CD8-positive, alpha-beta T cell (primary cell): ENCODE measurements at regions of chr6 and their contacts with region 1.

Region 1: GRCh38 chr6:31197559-31198305 is 27.2 kb upstream of the POU5F1 start:
- DNase-seq: peak; percentile 88 to 98 (median 93)
- ATAC-seq: peak; percentile 80
- H3K4me3 ChIP-seq: peak overlapping the region; percentile 79 to 80
- H3K4me3 Mint-ChIP-seq: peak overlapping the region; percentile 83
- H3K27ac ChIP-seq: peak overlapping the region; percentile 97 to 98
- H3K27ac Mint-ChIP-seq: peak overlapping the region; percentile 100
- H3K4me1 ChIP-seq: peaks cover 43% of the 10 kb centered on the region
- H3K4me1 Mint-ChIP-seq: peaks cover 62% of the 10 kb centered on the region
- H3K27me3 ChIP-seq: no peaks in the 10 kb centered on the region
- H3K27me3 Mint-ChIP-seq: no peaks in the 10 kb centered on the region
- CTCF ChIP-seq: no peak

Region 2: DNA sequence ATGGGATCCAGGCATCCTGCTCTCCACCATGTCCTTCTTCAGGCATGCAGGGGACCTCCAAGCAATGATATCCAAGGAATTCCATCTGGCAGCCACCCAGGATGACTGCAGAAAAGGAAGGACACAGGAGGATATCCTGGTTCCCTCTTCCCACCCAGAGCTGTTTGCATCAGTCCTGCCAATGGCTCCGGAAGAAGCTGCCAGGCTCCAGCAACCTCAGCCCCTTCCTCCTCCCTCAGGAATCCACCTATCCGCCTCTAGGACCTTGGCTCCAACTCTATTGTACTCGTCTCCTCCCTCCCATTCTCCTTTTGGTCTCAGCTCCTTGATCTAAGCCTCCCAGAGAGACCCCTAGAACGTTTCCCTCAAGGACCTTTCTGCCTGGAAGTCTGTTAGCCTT is 58.1 kb before region 1 on chr6:
- CTCF ChIA-PET with region 1: interaction called, 17 read pairs
- POLR2A ChIA-PET with region 1: interaction called, 3 read pairs
- intact Hi-C with region 1: loop called in 1 of 2 experiments (anchors 1 kb)
- DNase-seq: no peak
- ATAC-seq: no peak
- H3K4me3 ChIP-seq: no peak overlapping the region
- H3K4me3 Mint-ChIP-seq: no peak overlapping the region
- H3K27ac ChIP-seq: no peak overlapping the region
- H3K27ac Mint-ChIP-seq: no peak overlapping the region
- H3K4me1 ChIP-seq: peaks cover 5% of the 10 kb centered on the region
- H3K4me1 Mint-ChIP-seq: peaks cover 4% of the 10 kb centered on the region
- H3K27me3 ChIP-seq: no peaks in the 10 kb centered on the region
- H3K27me3 Mint-ChIP-seq: no peaks in the 10 kb centered on the region
- CTCF ChIP-seq: no peak

Region 3: DNA sequence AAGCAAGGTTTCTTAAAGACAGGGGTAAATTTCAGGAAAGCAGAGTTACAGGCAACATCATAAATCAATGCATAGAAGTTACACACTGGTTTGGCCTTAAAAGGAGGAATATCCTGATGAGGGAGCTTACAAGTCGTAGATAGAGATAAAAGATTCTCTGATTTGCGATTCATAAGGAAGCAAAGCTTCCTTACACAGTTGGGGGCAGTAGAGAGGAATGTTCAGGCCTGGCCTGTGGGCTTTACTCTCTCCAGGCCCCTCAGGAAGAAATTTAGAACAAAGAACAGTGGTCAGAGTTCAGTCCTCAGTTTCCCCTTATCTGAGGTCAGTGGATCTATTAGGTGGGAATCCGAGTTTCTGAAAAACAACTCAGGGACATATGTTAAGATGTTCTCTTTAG is 54.9 kb after region 1 on chr6:
- CTCF ChIA-PET with region 1: interaction called, 6 read pairs
- POLR2A ChIA-PET with region 1: no interaction called
- intact Hi-C with region 1: loop called in 1 of 2 experiments (anchors 5 kb)
- DNase-seq: peak in 2 of 9 experiments; percentile 8 to 35
- ATAC-seq: no peak
- H3K4me3 ChIP-seq: no peak overlapping the region
- H3K4me3 Mint-ChIP-seq: no peak overlapping the region
- H3K27ac ChIP-seq: no peak overlapping the region
- H3K27ac Mint-ChIP-seq: no peak overlapping the region
- H3K4me1 ChIP-seq: no peaks in the 10 kb centered on the region
- H3K4me1 Mint-ChIP-seq: peaks cover 9% of the 10 kb centered on the region
- H3K27me3 ChIP-seq: no peaks in the 10 kb centered on the region
- H3K27me3 Mint-ChIP-seq: no peaks in the 10 kb centered on the region
- CTCF ChIP-seq: no peak

Region 4: DNA sequence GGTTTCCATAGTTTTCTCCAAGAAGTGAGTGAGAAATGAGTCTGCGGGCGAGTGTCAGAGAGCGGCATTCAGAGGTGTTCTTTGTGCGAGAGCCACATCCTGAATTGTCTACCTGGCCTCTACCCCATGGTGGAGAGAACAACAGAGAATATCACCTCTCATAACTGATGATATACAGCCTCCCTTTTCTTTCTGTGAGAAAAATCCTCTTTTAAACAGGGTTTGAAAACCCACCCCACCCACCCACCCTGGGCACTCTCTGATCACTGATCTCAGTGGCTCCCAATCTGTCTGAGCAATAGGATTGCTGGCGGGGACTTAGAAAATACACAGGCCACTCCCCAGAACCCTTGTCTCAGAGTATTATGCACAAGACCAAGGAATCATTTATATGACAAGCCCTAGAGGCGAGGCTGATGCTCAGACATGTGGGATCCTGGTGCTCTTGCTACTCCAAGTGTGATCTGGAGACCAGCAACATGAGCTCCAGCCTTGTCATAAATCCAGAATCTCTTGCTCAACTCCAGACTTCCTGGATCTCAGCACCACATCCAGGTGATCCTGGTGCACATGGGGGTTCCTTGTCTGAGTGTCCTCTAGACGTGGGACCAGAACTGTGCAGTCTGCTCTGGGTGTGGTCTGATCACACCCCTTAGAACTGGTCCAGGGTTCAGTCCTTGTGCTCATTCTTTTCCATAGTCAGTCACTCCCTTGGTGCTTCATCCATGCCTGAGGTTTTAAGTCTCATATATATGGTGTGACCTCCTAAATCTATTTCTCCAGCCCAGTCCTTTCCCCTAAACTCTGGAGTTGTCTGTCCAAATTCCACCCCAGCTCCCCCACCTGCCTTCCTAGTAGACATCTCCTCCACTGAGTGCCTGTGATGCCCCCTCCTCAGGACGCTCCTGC is 153.9 kb after region 1 on chr6:
- CTCF ChIA-PET with region 1: no interaction called
- POLR2A ChIA-PET with region 1: interaction called, 35 read pairs
- intact Hi-C with region 1: no loop called
- DNase-seq: peak in 5 of 9 experiments; percentile 33 to 84 (median 50)
- ATAC-seq: peak; percentile 44
- H3K4me3 ChIP-seq: no peak overlapping the region
- H3K4me3 Mint-ChIP-seq: peak overlapping the region; percentile 100
- H3K27ac ChIP-seq: peak overlapping the region; percentile 41 to 42
- H3K27ac Mint-ChIP-seq: peak overlapping the region; percentile 81
- H3K4me1 ChIP-seq: peaks cover 40% of the 10 kb centered on the region
- H3K4me1 Mint-ChIP-seq: peaks cover 56% of the 10 kb centered on the region
- H3K27me3 ChIP-seq: no peaks in the 10 kb centered on the region
- H3K27me3 Mint-ChIP-seq: no peaks in the 10 kb centered on the region
- CTCF ChIP-seq: no peak

Region 5: GRCh38 chr6:31441365-31442267 is 243.9 kb after region 1 on chr6:
- CTCF ChIA-PET with region 1: no interaction called
- POLR2A ChIA-PET with region 1: no interaction called
- intact Hi-C with region 1: loop called in 1 of 2 experiments (anchors 2 kb)
- DNase-seq: peak in 8 of 9 experiments; percentile 80 to 93 (median 84)
- ATAC-seq: peak; percentile 98
- H3K4me3 ChIP-seq: no peak overlapping the region
- H3K4me3 Mint-ChIP-seq: no peak overlapping the region
- H3K27ac ChIP-seq: no peak overlapping the region
- H3K27ac Mint-ChIP-seq: no peak overlapping the region
- H3K4me1 ChIP-seq: peaks cover 7% of the 10 kb centered on the region
- H3K4me1 Mint-ChIP-seq: peaks cover 5% of the 10 kb centered on the region
- H3K27me3 ChIP-seq: peaks cover 0 to 3% of the 10 kb centered on the region in 2 experiments
- H3K27me3 Mint-ChIP-seq: peaks cover 37% of the 10 kb centered on the region
- CTCF ChIP-seq: peak; percentile 75